Activated CD8-positive, alpha-beta T cell treated with anti-CD3 and anti-CD28 coated beads for 36 hours (primary cell): ENCODE measurements at regions of chr15 and their contacts with region 1.

Region 1: DNA sequence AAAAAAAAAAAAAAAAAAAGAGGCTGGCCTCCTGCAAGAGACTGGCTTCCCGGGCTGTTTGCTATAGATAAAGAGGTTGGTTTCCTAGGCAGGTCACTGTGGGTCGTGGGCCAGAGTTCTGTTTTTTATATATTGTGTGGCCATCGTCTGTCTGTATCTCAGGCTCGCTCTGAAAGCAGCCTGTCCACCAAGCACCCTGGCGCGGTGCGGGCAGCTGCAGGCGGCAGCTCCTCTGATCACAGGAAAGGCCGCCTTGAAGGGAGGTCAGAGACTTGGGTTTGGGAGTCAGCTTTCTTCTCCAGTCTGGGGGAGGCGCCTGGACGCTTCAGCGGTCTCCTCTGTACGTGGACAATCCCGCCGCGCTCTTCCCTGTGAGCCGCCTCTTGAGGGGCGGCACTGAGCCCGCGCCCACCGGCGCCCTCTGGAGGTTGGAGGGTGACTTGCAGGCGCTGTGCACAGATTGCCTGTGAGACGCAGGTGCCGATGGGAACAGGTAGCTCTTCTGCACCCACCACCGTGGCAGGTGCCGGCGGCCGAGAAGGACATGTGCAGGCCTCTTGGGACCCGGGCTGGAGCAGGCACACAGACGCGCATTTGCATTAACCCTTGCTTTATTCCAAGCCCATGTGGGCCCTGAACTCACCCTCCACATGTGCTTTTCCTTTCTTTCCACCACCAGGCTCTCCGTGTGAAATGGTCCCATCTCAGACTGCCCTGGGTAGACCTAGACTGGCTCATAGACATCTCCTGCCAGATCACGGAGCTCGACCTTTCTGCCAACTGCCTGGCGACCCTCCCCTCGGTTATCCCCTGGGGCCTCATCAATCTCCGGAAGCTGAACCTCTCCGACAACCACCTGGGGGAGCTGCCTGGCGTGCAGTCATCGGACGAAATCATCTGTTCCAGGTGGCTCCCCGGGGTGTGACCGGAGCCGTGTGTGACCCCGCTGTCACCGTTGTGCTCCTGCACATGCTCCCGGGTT is 89.3 kb downstream of the LRRK1 start:
- DNase-seq: peak; percentile 91
- ATAC-seq: peak; percentile 99
- H3K4me3 Mint-ChIP-seq: peak overlapping the region; percentile 87
- H3K27ac Mint-ChIP-seq: no peak overlapping the region
- H3K4me1 Mint-ChIP-seq: peaks cover 21% of the 10 kb centered on the region
- H3K27me3 Mint-ChIP-seq: peaks cover 6% of the 10 kb centered on the region
- CTCF ChIP-seq: peak; percentile 96

Region 2: GRCh38 chr15:100627789-100628395 is 380.6 kb before region 1 on chr15:
- CTCF ChIA-PET with region 1: interaction called, 9 read pairs
- POLR2A ChIA-PET with region 1: no interaction called
- intact Hi-C with region 1: loop called (anchors 5 kb)
- DNase-seq: peak; percentile 74
- ATAC-seq: peak; percentile 93
- H3K4me3 Mint-ChIP-seq: no peak overlapping the region
- H3K27ac Mint-ChIP-seq: no peak overlapping the region
- H3K4me1 Mint-ChIP-seq: peaks cover 9% of the 10 kb centered on the region
- H3K27me3 Mint-ChIP-seq: no peaks in the 10 kb centered on the region
- CTCF ChIP-seq: peak; percentile 81

Region 3: GRCh38 chr15:100911086-100911485 is 97.4 kb before region 1 on chr15:
- CTCF ChIA-PET with region 1: interaction called, 243 read pairs
- POLR2A ChIA-PET with region 1: no interaction called
- intact Hi-C with region 1: no loop called
- DNase-seq: no peak
- ATAC-seq: no peak
- H3K4me3 Mint-ChIP-seq: no peak overlapping the region
- H3K27ac Mint-ChIP-seq: no peak overlapping the region
- H3K4me1 Mint-ChIP-seq: no peaks in the 10 kb centered on the region
- H3K27me3 Mint-ChIP-seq: peaks cover 21% of the 10 kb centered on the region
- CTCF ChIP-seq: no peak

Region 4: DNA sequence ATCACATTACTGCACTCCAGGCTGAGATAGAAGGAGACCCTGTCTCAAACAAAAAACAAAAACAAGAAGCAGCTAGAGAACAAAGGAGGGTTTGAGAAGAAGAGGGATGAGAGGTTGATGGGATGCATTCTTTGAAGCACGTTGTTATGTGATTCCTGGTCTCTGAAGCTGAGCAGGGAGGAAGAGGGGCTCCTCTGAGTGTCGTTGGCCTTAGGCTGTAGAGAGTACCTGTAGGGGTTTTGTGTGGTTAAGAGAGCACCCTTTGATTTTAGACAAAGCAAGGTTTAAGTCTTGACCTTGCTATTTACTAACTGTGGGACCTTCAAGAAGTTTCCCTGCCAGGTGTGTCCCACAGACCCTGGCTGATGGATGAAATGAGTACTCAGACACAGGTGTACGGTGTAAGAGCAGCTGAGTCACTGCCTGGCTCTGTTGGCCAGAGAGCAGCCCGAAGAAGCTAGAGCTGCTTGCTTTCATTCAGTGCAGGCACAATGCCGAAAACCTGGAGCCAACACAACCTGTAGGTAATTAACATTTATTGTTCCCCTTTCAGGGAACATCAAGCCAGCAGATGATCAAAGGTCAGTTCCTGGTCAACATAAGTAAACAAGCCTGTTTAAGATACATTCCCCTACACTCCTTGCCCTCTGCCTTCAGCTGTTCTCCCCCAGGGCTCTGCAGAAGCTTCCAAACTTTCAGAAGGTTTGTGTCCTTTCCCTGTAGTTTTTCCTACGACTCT is 22.1 kb before region 1 on chr15:
- CTCF ChIA-PET with region 1: interaction called, 30 read pairs
- POLR2A ChIA-PET with region 1: interaction called, 3 read pairs
- intact Hi-C with region 1: no loop called
- DNase-seq: no peak
- ATAC-seq: no peak
- H3K4me3 Mint-ChIP-seq: no peak overlapping the region
- H3K27ac Mint-ChIP-seq: no peak overlapping the region
- H3K4me1 Mint-ChIP-seq: no peaks in the 10 kb centered on the region
- H3K27me3 Mint-ChIP-seq: peaks cover 7% of the 10 kb centered on the region
- CTCF ChIP-seq: no peak

Region 5: DNA sequence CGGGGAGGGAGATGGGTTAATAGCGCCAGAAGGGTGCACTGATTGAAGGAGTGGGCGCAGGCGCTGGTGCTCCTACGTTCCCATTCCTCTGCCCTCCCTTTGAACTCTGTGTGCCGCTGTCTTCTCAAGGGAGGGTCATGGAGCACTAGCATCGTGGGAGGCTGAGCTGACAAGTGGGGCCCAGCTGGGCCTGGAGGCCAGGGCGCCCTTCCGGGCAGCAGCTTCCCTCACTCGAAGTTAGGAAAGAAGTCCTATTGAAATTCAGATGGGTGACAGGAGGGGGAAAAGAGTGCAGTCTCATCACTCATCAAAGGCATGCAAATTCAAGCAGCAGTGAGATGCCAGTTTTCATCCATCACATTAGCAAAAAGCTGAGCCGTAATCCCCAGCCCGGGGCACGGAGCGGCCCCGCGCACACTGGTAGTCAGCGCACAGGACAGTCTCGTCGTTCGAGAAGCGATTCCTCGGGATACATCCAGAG is 38.9 kb after region 1 on chr15:
- CTCF ChIA-PET with region 1: interaction called, 11 read pairs
- POLR2A ChIA-PET with region 1: no interaction called
- intact Hi-C with region 1: no loop called
- DNase-seq: no peak
- ATAC-seq: no peak
- H3K4me3 Mint-ChIP-seq: no peak overlapping the region
- H3K27ac Mint-ChIP-seq: no peak overlapping the region
- H3K4me1 Mint-ChIP-seq: no peaks in the 10 kb centered on the region
- H3K27me3 Mint-ChIP-seq: peaks cover 7% of the 10 kb centered on the region
- CTCF ChIP-seq: no peak

Region 6: DNA sequence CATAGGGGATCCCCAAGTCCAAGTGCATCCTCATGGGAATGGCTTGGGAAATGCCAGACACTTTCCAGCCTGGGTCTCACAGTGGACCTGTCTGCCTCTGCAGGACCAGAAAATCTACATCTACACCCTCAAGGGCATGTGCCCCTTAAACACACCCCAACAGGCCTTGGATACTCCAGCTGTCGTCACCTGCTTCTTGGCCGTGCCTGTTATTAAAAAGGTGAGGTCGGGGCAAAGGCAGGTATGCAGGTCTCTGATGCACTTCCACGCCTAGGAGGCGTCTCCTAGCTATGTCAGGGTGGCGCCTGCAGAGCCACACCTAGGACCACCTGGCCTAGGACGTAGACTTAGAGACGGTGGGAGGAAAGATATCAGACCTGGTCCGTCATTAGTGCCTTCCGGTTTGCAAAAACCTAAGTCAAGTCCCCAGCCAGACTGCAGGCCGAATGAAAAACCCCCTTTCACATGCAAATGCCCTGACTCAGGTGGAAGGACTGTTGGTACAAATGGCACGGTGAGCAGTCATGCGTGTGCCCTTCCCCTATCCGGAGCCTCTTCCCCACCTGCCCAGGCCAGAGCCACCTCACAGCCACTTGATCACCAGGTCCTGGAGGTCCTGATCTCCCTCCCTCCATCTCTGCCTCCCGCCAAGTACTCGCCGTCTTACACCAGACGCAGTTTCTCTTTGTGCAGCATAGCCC is 54.2 kb after region 1 on chr15:
- CTCF ChIA-PET with region 1: no interaction called
- POLR2A ChIA-PET with region 1: no interaction called
- intact Hi-C with region 1: no loop called
- DNase-seq: no peak
- ATAC-seq: no peak
- H3K4me3 Mint-ChIP-seq: no peak overlapping the region
- H3K27ac Mint-ChIP-seq: no peak overlapping the region
- H3K4me1 Mint-ChIP-seq: no peaks in the 10 kb centered on the region
- H3K27me3 Mint-ChIP-seq: no peaks in the 10 kb centered on the region
- CTCF ChIP-seq: no peak

Region 7: DNA sequence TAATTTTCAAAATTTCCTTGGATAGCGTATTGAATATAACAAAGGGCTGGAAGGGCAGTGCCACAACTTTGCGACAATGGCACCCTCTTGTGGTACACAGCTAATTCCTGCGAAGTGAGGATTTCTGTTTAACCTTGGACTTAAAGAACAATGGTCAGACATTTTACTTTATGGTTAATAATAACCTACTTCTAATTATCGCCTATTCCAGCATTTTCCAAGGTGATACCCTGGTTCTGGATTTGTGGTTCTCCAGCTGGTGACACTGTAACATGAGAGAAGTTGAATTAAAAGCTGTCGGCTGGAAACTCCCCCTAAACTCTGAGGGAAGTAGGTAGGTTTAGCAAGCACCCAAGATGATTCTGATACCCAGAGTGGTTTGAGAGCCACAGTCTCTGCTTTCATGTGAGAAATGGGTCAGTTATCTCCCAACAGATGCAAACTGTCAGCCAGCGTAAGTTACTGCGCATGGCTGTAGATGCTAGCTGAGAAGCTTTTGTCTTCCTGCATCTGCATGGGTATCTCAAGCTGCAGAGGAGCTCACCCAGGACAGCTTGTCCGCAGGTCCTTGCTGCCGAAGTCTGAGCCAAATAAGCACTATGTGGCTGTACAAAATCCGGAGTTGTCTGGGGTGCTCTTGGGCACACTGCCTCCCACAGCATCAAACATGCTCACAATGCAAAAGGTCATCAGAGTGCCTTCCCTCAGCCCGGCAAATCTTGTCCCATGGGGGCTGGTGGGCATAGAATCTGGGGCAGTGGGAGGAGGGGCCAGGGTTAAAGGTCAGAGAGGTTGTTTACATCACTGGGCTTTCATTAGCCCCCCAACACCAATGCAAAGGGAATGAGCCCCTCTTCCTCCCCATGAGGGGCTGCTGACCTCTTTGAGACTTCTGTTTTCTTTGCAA is 250.0 kb after region 1 on chr15:
- CTCF ChIA-PET with region 1: interaction called, 85 read pairs
- POLR2A ChIA-PET with region 1: no interaction called
- intact Hi-C with region 1: no loop called
- DNase-seq: peak; percentile 68
- ATAC-seq: no peak
- H3K4me3 Mint-ChIP-seq: no peak overlapping the region
- H3K27ac Mint-ChIP-seq: no peak overlapping the region
- H3K4me1 Mint-ChIP-seq: peaks cover 23% of the 10 kb centered on the region
- H3K27me3 Mint-ChIP-seq: peaks cover 7% of the 10 kb centered on the region
- CTCF ChIP-seq: peak; percentile 94